Astrocyte of the cerebellum (primary cell): ENCODE measurements at regions of chr3 and their contacts with region 1.

Region 1: GRCh38 chr3:4736284-4736861 is 242.9 kb upstream of the BHLHE40 start:
- DNase-seq: no peak
- H3K4me3 ChIP-seq: no peak overlapping the region
- CTCF ChIP-seq: no peak

Region 2: DNA sequence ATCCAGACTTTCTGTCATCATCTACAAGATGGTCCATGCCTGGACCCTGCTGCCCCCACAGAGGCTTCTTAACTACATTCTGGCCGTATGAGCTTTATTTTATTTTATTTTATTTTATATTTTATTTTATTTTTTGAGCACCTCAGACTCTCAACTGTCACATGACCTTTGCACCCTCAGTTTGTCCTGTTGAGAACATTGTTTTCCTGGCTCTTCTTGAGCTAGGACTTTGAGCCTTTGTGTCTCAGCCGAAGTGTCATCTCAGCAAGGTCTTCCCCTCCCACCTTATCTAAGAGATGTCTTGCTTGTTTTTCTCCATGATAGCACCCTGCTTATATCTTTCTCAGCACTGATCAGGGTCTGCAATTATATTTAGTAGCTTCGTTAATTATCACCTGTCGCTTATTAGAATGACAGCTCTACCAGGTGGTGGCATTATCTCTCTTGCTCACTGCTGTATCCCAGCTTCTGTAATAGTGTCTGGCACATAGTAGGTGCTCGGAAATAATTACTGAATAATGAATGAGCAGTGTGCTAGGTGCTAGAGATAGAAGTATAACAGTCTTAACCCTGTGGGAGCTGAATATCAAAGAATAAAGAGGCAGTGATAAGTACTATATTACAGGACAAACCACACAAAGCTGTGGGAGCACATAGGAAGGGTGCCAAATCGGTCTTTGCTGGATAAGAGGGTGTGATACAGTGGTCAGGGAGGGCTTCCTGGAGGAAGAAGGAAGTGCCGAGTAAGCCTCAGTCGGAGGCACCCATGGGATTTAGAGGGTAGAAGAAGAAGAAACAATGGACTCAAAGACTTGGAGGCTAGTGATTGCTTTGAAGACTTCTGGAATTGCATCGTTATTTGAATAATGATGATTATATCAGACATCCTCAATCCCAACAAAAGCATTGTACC is 107.0 kb before region 1 on chr3:
- in situ Hi-C with region 1: no loop called
- DNase-seq: no peak
- H3K4me3 ChIP-seq: no peak overlapping the region
- CTCF ChIP-seq: no peak

Region 3: GRCh38 chr3:4986782-4987537 is 250.6 kb after region 1 on chr3:
- in situ Hi-C with region 1: loop called (anchors 5 kb)
- DNase-seq: peak; percentile 95
- H3K4me3 ChIP-seq: peak overlapping the region; percentile 11
- CTCF ChIP-seq: no peak